Calu3 (cell line): ENCODE measurements at regions of chr19 and their contacts with region 1.

Region 1: DNA sequence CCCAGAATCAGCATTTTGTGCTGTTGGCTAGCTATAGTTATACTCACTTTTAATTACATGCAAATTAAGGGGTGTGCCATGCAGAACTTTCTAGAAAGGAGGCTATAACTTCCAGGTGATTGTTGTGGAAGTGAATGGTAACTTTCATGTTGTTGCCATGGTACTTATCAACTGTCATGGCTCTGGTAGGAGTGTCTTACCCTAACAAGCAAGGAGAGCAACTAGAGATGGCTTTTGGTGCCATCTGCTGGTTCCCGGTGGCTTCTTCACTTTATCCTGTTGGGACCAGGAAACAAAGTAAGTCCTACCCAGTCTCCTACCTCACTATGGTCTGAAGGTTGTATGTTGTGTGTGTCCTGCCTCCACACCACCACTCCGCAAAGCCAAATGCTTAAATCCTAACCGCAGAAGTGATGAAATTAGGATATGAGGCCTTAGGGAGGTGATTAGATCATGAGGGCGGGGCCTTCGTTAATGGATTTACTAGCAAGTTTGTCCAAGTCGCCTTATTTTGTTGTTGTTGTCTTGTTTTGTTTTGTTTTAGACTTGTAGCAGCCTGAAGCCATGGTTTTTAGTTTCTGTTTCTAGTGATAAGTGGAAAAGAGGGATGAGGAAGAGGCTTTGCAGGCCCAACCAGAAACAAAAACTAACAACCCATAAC is 22.6 kb downstream of the FBXL12 start:
- DNase-seq: peak; percentile 76
- H3K4me3 Mint-ChIP-seq: no peak overlapping the region
- H3K27ac Mint-ChIP-seq: peak overlapping the region; percentile 74
- H3K4me1 Mint-ChIP-seq: peaks cover 8% of the 10 kb centered on the region
- H3K27me3 Mint-ChIP-seq: no peaks in the 10 kb centered on the region
- CTCF ChIP-seq: peak; percentile 61

Region 2: GRCh38 chr19:9205501-9206113 is 590.6 kb before region 1 on chr19:
- CTCF ChIA-PET with region 1: no interaction called
- intact Hi-C with region 1: loop called (anchors 2 kb)
- DNase-seq: peak; percentile 64
- H3K4me3 Mint-ChIP-seq: no peak overlapping the region
- H3K27ac Mint-ChIP-seq: no peak overlapping the region
- H3K4me1 Mint-ChIP-seq: no peaks in the 10 kb centered on the region
- H3K27me3 Mint-ChIP-seq: no peaks in the 10 kb centered on the region
- CTCF ChIP-seq: peak; percentile 49

Region 3: GRCh38 chr19:9584073-9584833 is 212.0 kb before region 1 on chr19 and contains the start of gene ZNF121:
- CTCF ChIA-PET with region 1: no interaction called
- intact Hi-C with region 1: loop called (anchors 2 kb)
- DNase-seq: peak; percentile 77
- H3K4me3 Mint-ChIP-seq: peak within 1 kb of the TSS; percentile 83
- H3K27ac Mint-ChIP-seq: peak within 1 kb of the TSS; percentile 93
- H3K4me1 Mint-ChIP-seq: peaks cover 17% of the 10 kb centered on the region
- H3K27me3 Mint-ChIP-seq: no peaks in the 10 kb centered on the region
- CTCF ChIP-seq: no peak
- total RNA-seq, gene ZNF121: 61.1 and 66.2 TPM in 2 replicates